CD8-positive, alpha-beta T cell (primary cell): ENCODE measurements at regions of chr10 and their contacts with region 1.

Region 1: DNA sequence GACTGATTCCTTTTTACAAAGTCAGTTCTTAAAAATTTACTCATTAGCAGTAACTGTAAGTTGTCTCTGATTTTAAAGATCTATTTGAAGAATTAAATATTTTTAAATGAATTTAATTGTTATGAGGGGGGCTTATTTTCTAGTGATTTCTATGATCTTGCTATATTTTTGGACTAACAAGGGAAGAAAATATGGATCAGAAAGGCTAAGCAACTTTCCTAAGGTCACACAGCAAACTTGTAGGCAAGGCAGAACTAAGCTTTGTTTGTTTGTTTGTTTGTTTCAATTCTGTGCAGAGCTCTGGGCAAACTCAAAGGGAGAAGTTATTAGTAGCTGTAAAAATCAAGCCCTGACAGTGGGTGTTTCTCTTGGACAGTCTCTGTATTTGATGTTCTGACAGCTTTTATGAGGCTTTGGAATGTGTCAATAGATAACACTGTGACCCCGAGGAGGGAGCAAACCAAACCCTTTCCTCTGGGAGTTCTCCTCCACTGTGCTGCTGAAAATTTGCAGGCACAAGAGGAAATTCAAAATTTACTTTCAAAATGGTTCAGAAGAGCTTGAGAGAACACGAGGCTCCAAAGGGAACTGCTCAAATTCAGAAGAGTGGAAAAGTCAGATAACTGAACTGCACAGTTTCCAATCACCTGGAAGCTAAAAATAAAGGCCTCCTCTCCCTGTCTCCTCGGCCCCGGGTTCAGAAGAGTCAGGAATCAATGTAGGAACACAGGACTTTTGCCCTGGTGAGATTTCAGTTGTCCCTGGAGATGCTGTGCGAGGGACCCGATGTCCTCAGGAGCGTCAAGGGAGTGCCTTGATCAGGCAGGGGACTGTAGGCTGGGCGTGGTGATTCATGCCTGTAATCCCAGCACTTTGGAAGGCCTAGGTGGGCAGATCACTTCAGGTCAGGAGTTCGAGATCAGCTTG is 325.7 kb downstream of the GATA3 start:
- DNase-seq: no peak
- ATAC-seq: no peak
- H3K4me3 ChIP-seq: no peak overlapping the region
- H3K4me3 Mint-ChIP-seq: no peak overlapping the region
- H3K27ac ChIP-seq: no peak overlapping the region
- H3K27ac Mint-ChIP-seq: no peak overlapping the region
- H3K4me1 ChIP-seq: no peaks in the 10 kb centered on the region
- H3K4me1 Mint-ChIP-seq: no peaks in the 10 kb centered on the region
- H3K27me3 ChIP-seq: no peaks in the 10 kb centered on the region
- H3K27me3 Mint-ChIP-seq: no peaks in the 10 kb centered on the region
- CTCF ChIP-seq: no peak

Region 2: DNA sequence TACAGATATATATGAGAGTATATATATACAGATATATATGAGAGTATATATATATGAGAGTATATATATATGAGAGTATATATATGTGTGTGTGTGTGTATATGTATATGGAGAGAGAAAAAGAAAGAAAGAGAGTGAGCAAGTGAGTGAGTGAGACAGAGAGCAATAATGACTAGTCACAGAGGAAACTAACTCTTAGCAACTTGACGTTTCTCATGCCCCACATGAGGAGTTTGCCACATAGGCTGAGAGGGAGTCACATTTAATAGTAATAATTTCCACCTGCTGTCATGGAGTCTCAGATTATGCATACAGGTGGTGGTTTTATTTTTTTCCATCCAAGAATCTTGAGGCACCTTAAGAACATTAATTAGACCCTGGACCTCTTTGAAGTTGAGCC is 125.8 kb before region 1 on chr10:
- CTCF ChIA-PET with region 1: no interaction called
- POLR2A ChIA-PET with region 1: no interaction called
- intact Hi-C with region 1: no loop called
- DNase-seq: no peak
- ATAC-seq: no peak
- H3K4me3 ChIP-seq: no peak overlapping the region
- H3K4me3 Mint-ChIP-seq: no peak overlapping the region
- H3K27ac ChIP-seq: no peak overlapping the region
- H3K27ac Mint-ChIP-seq: no peak overlapping the region
- H3K4me1 ChIP-seq: no peaks in the 10 kb centered on the region
- H3K4me1 Mint-ChIP-seq: no peaks in the 10 kb centered on the region
- H3K27me3 ChIP-seq: no peaks in the 10 kb centered on the region
- H3K27me3 Mint-ChIP-seq: no peaks in the 10 kb centered on the region
- CTCF ChIP-seq: no peak

Region 3: GRCh38 chr10:8398771-8399170 is 18.6 kb after region 1 on chr10:
- CTCF ChIA-PET with region 1: interaction called, 3 read pairs
- POLR2A ChIA-PET with region 1: interaction called, 3 read pairs
- intact Hi-C with region 1: loop called in 1 of 2 experiments (anchors 2 kb)
- DNase-seq: no peak
- ATAC-seq: no peak
- H3K4me3 ChIP-seq: no peak overlapping the region
- H3K4me3 Mint-ChIP-seq: no peak overlapping the region
- H3K27ac ChIP-seq: no peak overlapping the region
- H3K27ac Mint-ChIP-seq: no peak overlapping the region
- H3K4me1 ChIP-seq: peaks cover 25% of the 10 kb centered on the region
- H3K4me1 Mint-ChIP-seq: peaks cover 49% of the 10 kb centered on the region
- H3K27me3 ChIP-seq: no peaks in the 10 kb centered on the region
- H3K27me3 Mint-ChIP-seq: no peaks in the 10 kb centered on the region
- CTCF ChIP-seq: no peak